Activated naive CD4-positive, alpha-beta T cell treated with anti-CD3 and anti-CD28 coated beads, Interleukin-2, amount 10 ng/mL, durations not matched to agents 7 days and 5 days (primary cell): ENCODE measurements at regions of chr6 and their contacts with region 1.

Region 1: DNA sequence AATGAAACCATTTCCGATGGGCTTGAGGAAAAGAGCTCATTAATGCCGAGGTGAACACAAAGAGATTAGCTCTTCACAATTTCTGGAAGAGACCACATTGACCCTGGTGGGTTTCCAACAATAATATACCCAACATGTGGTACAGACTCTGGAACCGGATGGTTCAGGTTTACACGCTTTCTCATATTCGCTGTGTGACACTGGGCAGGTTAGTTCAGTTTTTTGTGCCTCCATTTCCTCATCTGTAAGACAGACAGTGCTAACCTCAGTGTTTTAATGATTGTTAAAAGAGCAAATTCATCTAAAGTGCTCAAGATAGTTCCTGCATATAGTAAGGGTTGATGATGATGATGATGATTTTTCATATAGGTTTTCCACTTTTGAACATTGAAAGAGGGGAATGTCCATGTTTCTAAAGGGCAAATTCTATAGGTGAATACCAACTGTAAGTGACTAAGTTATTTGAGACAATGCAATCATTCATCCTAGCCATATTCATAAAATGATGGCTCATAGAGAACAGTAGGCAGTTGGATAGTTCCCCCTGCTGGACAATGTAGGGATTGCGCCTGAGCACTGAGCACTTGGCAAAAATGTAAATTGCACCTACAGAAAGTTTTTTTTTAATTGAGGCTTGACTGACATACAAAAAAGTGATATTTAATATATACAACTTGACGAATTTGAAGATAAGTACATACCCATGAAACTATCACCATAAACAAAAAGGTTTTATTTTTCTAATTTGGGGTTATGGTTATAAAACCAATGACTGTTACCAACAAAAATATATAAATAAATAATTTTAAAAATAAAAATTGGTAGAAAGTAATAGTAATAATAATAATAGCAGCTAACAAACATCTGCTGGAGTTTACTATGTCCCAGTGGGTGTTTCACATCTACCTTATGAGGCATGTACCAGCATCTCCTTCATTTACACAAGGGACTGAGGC is 2.1 kb upstream of the PERP start:
- DNase-seq: peak; percentile 87
- H3K4me3 Mint-ChIP-seq: no peak overlapping the region
- H3K27ac Mint-ChIP-seq: no peak overlapping the region
- H3K4me1 Mint-ChIP-seq: peaks cover 36% of the 10 kb centered on the region
- H3K27me3 Mint-ChIP-seq: peaks cover 46% of the 10 kb centered on the region

Region 2: GRCh38 chr6:138007014-138007472 is 102.3 kb before region 1 on chr6:
- CTCF ChIA-PET with region 1: interaction called, 69 read pairs
- DNase-seq: peak; percentile 44
- H3K4me3 Mint-ChIP-seq: no peak overlapping the region
- H3K27ac Mint-ChIP-seq: no peak overlapping the region
- H3K4me1 Mint-ChIP-seq: peaks cover 26% of the 10 kb centered on the region
- H3K27me3 Mint-ChIP-seq: no peaks in the 10 kb centered on the region

Region 3: GRCh38 chr6:138089325-138089724 is 20.0 kb before region 1 on chr6:
- CTCF ChIA-PET with region 1: no interaction called
- DNase-seq: no peak
- H3K4me3 Mint-ChIP-seq: no peak overlapping the region
- H3K27ac Mint-ChIP-seq: no peak overlapping the region
- H3K4me1 Mint-ChIP-seq: no peaks in the 10 kb centered on the region
- H3K27me3 Mint-ChIP-seq: peaks cover 10% of the 10 kb centered on the region